Mucosa of descending colon (tissue), 3 donors: ENCODE measurements at regions of chr12 and their contacts with region 1.

Region 1: GRCh38 chr12:42315108-42315507 is 10.8 kb downstream of the ZCRB1 start:
- DNase-seq: no peak
- ATAC-seq: no peak
- H3K4me3 ChIP-seq: no peak overlapping the region
- H3K4me1 ChIP-seq: no peaks in the 10 kb centered on the region
- CTCF ChIP-seq: no peak

Region 2: DNA sequence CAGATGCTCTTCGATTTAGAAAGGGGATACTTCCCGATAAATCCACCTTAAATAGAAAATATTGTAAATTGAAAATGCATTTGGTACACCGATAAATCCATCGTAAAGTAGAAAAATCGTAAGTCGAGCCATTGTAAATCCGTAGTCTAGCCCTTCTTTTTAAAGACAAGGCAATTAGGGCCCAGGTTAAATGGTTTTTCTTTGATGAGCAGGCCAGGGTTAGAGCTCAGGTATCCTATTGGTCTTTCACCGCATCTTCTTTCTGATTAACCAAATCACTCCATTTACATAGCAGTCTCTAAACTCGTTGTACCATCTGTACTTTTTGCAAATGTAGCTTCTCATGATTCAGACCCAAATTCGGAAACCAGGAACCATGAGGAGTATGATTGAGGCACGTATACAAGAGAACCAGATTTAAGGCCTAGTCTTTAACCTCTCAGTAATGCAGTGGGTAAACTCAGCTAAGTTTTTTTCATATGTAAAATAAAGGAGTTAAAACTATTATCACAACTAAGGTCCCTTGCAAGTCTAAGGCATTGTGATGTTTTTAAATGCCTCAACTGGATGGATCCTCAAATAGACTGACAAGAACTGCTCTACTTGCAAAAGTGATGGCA is 74.9 kb before region 1 on chr12:
- intact Hi-C with region 1: loop called in 1 of 2 experiments (anchors 10 kb)
- DNase-seq: no peak
- ATAC-seq: no peak
- H3K4me3 ChIP-seq: no peak overlapping the region
- H3K4me1 ChIP-seq: peaks cover 14% of the 10 kb centered on the region
- CTCF ChIP-seq: no peak